GM18951 (cell line): ENCODE measurements at regions of chr13 and their contacts with region 1.

Region 1: GRCh38 chr13:30132623-30133553 is 174.5 kb downstream of the KATNAL1 start:
- POLR2A ChIP-seq: no peak

Region 2: DNA sequence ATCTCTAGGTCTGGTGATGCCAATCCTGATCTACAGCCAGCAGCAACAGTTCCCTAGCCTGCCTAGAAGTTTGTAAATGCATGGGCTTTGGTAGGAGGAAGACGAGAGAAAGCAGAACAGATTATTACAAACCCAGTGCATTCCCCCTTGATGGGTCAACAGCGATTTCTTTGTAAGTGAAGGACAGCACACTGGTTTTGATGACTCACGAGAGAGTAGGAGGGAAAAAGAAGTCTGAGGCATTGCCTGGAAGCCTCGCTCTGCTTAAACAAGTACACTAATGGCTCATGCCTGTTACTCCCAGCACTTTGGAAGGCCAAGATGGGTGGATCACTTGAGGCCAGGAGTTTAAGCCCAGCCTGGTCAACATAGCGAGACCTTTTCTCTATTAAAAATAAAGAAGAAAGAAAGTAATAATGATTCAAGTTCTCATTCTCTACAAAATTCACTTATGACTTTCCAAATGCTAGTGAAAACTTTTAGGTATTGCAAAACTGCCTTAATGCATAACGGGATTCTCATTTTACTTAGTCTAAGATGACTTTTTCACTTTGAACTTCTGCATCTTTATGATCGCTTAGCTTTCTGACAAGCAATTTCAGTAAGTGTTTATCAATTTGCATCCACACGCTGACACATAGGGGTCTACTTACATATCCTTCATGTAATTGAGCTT is 437.2 kb after region 1 on chr13:
- in situ Hi-C with region 1: loop called (anchors 10 kb)
- POLR2A ChIP-seq: no peak

Region 3: DNA sequence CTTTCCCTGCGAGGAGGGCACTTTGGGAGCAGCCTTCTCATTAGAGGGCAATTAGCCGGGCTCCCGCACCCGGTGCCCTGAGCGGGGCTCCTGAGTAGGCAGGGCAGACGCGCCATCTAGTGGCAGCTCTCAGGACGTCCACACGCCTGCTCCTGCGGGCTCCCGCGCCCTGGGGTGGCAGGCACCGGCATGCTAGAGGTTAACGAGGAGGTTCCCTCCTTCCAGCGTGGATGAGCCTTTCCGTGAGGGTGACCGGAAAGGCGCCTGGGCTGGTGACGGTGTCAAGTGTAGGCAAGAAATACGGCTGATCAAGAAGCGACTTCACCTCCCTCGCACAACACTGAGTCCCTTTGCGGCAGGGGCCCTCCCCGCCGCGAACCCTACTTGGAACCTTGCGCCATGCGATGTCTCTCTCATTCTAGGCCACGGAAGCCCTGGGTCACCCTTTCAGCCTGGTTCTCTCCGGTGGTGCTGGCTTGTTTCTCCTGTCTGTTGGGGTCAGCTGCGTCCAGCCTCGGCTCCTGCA is 670.1 kb after region 1 on chr13:
- in situ Hi-C with region 1: loop called (anchors 25 kb)
- POLR2A ChIP-seq: no peak